Endothelial cell of umbilical vein (primary cell): ENCODE measurements at regions of chr4 and their contacts with region 1.

Region 1: DNA sequence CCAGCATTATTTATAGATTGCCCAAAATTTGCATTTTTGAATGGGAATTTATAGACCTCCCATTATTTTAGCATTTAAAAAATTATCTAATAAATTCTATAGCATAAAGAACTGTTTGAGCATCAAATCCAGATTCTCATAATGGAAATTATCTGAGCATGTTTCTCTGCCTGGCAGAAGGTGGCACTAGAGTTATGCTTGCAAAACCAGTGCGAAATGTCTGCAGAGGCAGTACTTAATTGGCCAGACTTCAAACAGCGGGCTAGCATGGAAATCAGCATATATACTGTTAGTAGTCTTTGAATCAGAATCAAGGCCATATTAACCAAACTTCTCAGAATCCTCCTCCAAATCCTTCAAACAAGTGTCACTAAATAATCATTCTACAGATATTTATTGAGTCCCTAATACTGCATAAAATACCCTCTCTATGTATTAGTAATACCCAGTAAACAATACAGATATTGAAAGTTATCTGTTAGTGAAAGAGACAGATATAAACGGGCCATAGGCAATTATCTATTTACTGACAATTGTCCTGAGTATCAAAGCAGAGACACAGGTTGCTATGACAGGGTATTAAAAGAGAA is 78.7 kb upstream of the DCLK2 start:
- DNase-seq: peak; percentile 70
- H3K4me3 ChIP-seq: no peak overlapping the region
- H3K27ac ChIP-seq: no peak overlapping the region
- H3K4me1 ChIP-seq: no peaks in the 10 kb centered on the region
- H3K27me3 ChIP-seq: no peaks in the 10 kb centered on the region
- CTCF ChIP-seq: peak; percentile 59 to 61
- POLR2A ChIP-seq: no peak

Region 2: DNA sequence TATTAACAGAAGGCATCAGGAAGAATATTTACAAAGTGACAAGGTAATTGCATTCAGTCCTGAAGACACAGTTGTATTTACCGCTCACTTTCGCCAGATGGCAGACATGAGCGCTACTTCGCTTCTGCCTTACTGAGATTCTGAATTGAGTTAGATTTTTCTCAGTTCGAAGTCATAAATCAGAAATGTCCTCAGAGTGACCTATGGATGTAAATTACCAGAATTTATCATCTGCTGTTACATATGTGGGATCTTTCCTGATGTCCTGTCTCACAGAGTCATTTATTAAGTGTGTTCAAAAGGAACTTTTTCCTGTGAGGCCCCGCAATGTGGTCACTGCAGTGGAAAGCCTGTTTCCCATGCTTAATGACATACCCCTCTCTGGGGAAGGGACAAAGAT is 18.6 kb before region 1 on chr4:
- CTCF ChIA-PET with region 1: no interaction called
- POLR2A ChIA-PET with region 1: no interaction called
- dilution Hi-C with region 1: no loop called
- intact Hi-C with region 1: loop called (anchors 2 kb)
- DNase-seq: peak; percentile 75
- H3K4me3 ChIP-seq: no peak overlapping the region
- H3K27ac ChIP-seq: no peak overlapping the region
- H3K4me1 ChIP-seq: no peaks in the 10 kb centered on the region
- H3K27me3 ChIP-seq: no peaks in the 10 kb centered on the region
- CTCF ChIP-seq: peak; percentile 55 to 71
- POLR2A ChIP-seq: no peak

Region 3: GRCh38 chr4:150583287-150584110 is 583.9 kb after region 1 on chr4:
- CTCF ChIA-PET with region 1: no interaction called
- POLR2A ChIA-PET with region 1: no interaction called
- dilution Hi-C with region 1: no loop called
- intact Hi-C with region 1: loop called (anchors 5 kb)
- DNase-seq: peak; percentile 26
- H3K4me3 ChIP-seq: peak overlapping the region in 2 of 3 experiments; percentile 20 to 42
- H3K27ac ChIP-seq: no peak overlapping the region
- H3K4me1 ChIP-seq: no peaks in the 10 kb centered on the region
- H3K27me3 ChIP-seq: no peaks in the 10 kb centered on the region
- CTCF ChIP-seq: no peak
- POLR2A ChIP-seq: no peak